Naive thymus-derived CD4-positive, alpha-beta T cell (primary cell): ENCODE measurements at regions of chr1 and their contacts with region 1.

Region 1: DNA sequence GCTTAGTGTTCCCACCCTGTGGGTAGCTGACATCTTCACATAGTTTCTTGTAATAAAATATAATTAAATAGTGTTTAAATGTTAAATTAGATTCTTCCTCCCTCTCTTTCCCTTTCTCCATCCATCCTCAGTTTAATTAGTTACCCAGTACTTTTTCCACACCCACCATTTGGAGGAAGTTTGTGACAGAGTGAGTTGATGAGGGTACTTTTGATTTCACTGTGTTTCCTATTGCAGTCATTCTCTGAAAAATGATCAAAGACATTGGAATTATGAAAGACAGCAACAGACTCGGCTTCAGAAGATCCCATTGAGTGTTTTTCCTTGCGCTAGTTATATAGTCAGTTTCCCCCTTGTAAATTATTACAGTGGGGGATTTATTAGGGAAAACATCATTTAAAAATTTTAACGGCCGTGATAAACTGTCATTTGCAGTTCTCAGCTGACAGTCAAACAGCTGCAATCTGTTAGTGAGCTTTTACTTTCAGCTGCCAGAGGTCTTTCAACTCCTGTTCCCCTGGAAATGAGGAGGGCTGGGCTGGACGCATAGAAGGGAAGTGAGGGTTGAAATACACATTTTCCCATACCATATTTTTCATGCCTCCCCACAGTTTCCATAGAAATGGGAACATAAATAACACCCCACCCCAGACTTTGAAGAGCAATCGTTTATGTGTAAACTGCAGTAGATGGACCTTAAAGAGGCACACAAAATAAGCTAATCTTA is 61.3 kb upstream of the CACYBP start:
- DNase-seq: no peak
- ATAC-seq: peak; percentile 41
- H3K4me3 ChIP-seq: no peak overlapping the region
- H3K4me3 Mint-ChIP-seq: peak overlapping the region; percentile 22 to 75 (median 57)
- H3K27ac ChIP-seq: no peak overlapping the region
- H3K27ac Mint-ChIP-seq: peak overlapping the region in 7 of 9 donors; percentile 1 to 81 (median 16)
- H3K4me1 ChIP-seq: no peaks in the 10 kb centered on the region
- H3K4me1 Mint-ChIP-seq: peaks cover 14 to 26% (median 16%) of the 10 kb centered on the region in 7 donors
- H3K27me3 ChIP-seq: no peaks in the 10 kb centered on the region
- H3K27me3 Mint-ChIP-seq: no peaks in the 10 kb centered on the region

Region 2: GRCh38 chr1:174659823-174660515 is 278.5 kb before region 1 on chr1:
- CTCF ChIA-PET with region 1: no interaction called
- POLR2A ChIA-PET with region 1: no interaction called
- intact Hi-C with region 1: no loop called
- DNase-seq: no peak
- ATAC-seq: no peak
- H3K4me3 ChIP-seq: no peak overlapping the region
- H3K4me3 Mint-ChIP-seq: no peak overlapping the region
- H3K27ac ChIP-seq: no peak overlapping the region
- H3K27ac Mint-ChIP-seq: no peak overlapping the region
- H3K4me1 ChIP-seq: no peaks in the 10 kb centered on the region
- H3K4me1 Mint-ChIP-seq: peaks cover 0 to 3% (median 0%) of the 10 kb centered on the region in 7 donors
- H3K27me3 ChIP-seq: no peaks in the 10 kb centered on the region
- H3K27me3 Mint-ChIP-seq: no peaks in the 10 kb centered on the region

Region 3: DNA sequence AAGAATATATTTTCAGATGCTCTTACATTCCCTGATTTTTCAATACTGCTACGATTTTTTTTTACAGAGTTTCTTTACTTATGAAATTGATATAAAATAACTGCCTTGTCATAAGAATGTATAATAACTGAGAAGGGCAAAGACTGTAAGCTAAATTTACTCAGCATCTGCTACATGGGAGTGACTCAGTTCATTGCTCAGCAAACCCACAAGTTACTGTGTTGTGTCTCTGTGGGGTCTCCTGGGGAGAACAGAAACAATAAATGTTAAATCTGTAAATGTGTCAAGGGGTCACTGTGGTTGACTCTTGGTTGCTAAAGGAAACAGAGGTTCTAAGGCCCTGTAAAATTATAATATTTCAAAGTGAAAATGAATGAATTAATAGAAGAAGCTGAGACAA is 149.0 kb before region 1 on chr1:
- CTCF ChIA-PET with region 1: no interaction called
- POLR2A ChIA-PET with region 1: no interaction called
- intact Hi-C with region 1: no loop called
- DNase-seq: no peak
- ATAC-seq: no peak
- H3K4me3 ChIP-seq: no peak overlapping the region
- H3K4me3 Mint-ChIP-seq: no peak overlapping the region
- H3K27ac ChIP-seq: no peak overlapping the region
- H3K27ac Mint-ChIP-seq: no peak overlapping the region
- H3K4me1 ChIP-seq: peaks cover 0 to 9% of the 10 kb centered on the region in 2 donors
- H3K4me1 Mint-ChIP-seq: peaks cover 6 to 21% (median 11%) of the 10 kb centered on the region in 7 donors
- H3K27me3 ChIP-seq: no peaks in the 10 kb centered on the region
- H3K27me3 Mint-ChIP-seq: peaks cover 0 to 2% (median 0%) of the 10 kb centered on the region in 5 donors

Region 4: GRCh38 chr1:174912264-174912663 is 26.2 kb before region 1 on chr1:
- CTCF ChIA-PET with region 1: no interaction called
- POLR2A ChIA-PET with region 1: no interaction called
- intact Hi-C with region 1: no loop called
- DNase-seq: no peak
- ATAC-seq: no peak
- H3K4me3 ChIP-seq: no peak overlapping the region
- H3K4me3 Mint-ChIP-seq: no peak overlapping the region
- H3K27ac ChIP-seq: peak overlapping the region; percentile 7
- H3K27ac Mint-ChIP-seq: peak overlapping the region in 3 of 9 donors; percentile 67 to 74 (median 71)
- H3K4me1 ChIP-seq: no peaks in the 10 kb centered on the region
- H3K4me1 Mint-ChIP-seq: peaks cover 6 to 36% (median 19%) of the 10 kb centered on the region in 7 donors
- H3K27me3 ChIP-seq: no peaks in the 10 kb centered on the region
- H3K27me3 Mint-ChIP-seq: no peaks in the 10 kb centered on the region

Region 5: GRCh38 chr1:174953285-174954072 is 15.0 kb after region 1 on chr1:
- CTCF ChIA-PET with region 1: interaction called, 3 read pairs
- POLR2A ChIA-PET with region 1: no interaction called
- intact Hi-C with region 1: loop called in 1 of 2 experiments (anchors 1 kb)
- DNase-seq: no peak
- ATAC-seq: no peak
- H3K4me3 ChIP-seq: no peak overlapping the region
- H3K4me3 Mint-ChIP-seq: no peak overlapping the region
- H3K27ac ChIP-seq: no peak overlapping the region
- H3K27ac Mint-ChIP-seq: peak overlapping the region in 2 of 9 donors; percentile 1 to 65
- H3K4me1 ChIP-seq: peaks cover 0 to 14% of the 10 kb centered on the region in 2 donors
- H3K4me1 Mint-ChIP-seq: peaks cover 21 to 35% (median 28%) of the 10 kb centered on the region in 7 donors
- H3K27me3 ChIP-seq: no peaks in the 10 kb centered on the region
- H3K27me3 Mint-ChIP-seq: no peaks in the 10 kb centered on the region

Region 6: GRCh38 chr1:175900171-175900570 is 961.7 kb after region 1 on chr1:
- CTCF ChIA-PET with region 1: no interaction called
- POLR2A ChIA-PET with region 1: no interaction called
- intact Hi-C with region 1: no loop called
- DNase-seq: no peak
- ATAC-seq: no peak
- H3K4me3 ChIP-seq: no peak overlapping the region
- H3K4me3 Mint-ChIP-seq: no peak overlapping the region
- H3K27ac ChIP-seq: no peak overlapping the region
- H3K27ac Mint-ChIP-seq: no peak overlapping the region
- H3K4me1 ChIP-seq: no peaks in the 10 kb centered on the region
- H3K4me1 Mint-ChIP-seq: no peaks in the 10 kb centered on the region
- H3K27me3 ChIP-seq: no peaks in the 10 kb centered on the region
- H3K27me3 Mint-ChIP-seq: no peaks in the 10 kb centered on the region